Natural killer cell (primary cell): ENCODE measurements at regions of chr14 and their contacts with region 1.

Region 1: GRCh38 chr14:22314181-22314820 is 274.7 kb downstream of the DAD1 start:
- DNase-seq: peak in 1 of 2 donors; percentile 51
- ATAC-seq: peak; percentile 83 to 98 (median 94)
- H3K4me3 ChIP-seq: no peak overlapping the region
- H3K4me3 Mint-ChIP-seq: no peak overlapping the region
- H3K27ac ChIP-seq: no peak overlapping the region
- H3K27ac Mint-ChIP-seq: no peak overlapping the region
- H3K4me1 ChIP-seq: no peaks in the 10 kb centered on the region
- H3K4me1 Mint-ChIP-seq: no peaks in the 10 kb centered on the region
- H3K27me3 ChIP-seq: no peaks in the 10 kb centered on the region
- H3K27me3 Mint-ChIP-seq: peaks cover 0 to 9% of the 10 kb centered on the region in 2 donors
- CTCF ChIP-seq: peak; percentile 73

Region 2: DNA sequence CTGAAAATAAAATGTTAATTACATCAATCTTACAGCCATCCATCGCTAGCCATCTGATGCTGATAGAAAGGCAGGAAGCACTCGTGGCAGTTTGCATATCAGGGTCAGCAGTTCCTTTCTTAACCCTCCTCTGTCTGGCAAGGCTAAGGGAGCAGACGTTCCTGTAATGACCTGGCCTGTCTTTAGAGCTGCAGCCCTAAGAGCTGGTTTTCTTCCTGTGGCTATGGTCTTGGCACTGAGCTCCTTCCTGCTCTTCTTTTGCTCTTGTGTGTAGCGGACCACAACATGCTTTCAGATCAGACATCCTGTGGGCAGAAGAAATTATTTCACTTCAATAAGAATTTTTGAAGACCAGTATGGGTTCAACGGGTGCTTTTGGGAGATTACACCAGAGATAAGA is 104.3 kb after region 1 on chr14:
- intact Hi-C with region 1: no loop called
- DNase-seq: no peak
- ATAC-seq: peak; percentile 43 to 64 (median 55)
- H3K4me3 ChIP-seq: no peak overlapping the region
- H3K4me3 Mint-ChIP-seq: peak overlapping the region; percentile 78
- H3K27ac ChIP-seq: peak overlapping the region; percentile 75
- H3K27ac Mint-ChIP-seq: peak overlapping the region; percentile 91 to 94
- H3K4me1 ChIP-seq: peaks cover 67% of the 10 kb centered on the region
- H3K4me1 Mint-ChIP-seq: peaks cover 73 to 79% of the 10 kb centered on the region in 2 donors
- H3K27me3 ChIP-seq: no peaks in the 10 kb centered on the region
- H3K27me3 Mint-ChIP-seq: no peaks in the 10 kb centered on the region
- CTCF ChIP-seq: no peak

Region 3: DNA sequence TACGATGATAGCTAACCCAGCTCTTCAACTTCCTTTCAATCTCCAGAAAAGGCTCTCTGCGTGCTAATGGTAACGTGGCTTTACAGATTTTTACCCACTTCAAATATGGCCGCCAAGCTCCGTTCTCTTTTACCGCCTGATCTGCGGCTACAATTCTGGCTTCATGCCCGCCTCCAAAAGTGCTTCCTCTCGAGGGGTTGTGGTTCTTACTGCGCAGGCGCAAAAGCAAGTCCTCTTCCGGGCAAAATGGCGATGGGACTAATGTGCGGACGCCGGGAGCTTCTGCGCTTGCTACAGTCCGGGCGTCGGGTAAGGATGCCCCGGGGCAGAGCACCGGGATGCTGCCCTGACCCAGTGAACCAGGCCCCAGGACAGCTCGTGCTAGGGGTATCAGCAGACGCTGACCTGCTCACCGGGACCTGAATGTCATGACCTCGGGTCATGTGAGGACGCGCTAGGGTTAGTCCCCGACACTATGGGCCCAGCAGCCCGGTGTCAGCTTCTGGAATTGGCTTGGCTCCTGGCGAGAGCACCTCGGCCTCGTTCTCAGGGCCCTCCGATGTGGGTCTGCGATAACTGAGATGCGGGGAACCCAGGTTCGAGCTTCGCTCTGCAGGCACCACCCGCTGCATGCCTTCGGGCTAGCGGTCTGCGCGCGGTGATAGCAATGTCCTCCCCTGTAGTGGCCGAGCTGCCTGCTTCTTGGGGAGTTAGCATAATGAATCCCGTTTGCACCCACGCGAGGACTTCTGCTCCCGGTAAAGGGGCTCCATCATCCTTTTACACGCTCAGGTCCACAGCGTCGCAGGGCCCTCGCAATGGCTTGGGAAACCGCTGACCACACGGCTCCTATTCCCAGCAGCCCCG is 452.4 kb after region 1 on chr14 and contains the start of gene OXA1L:
- intact Hi-C with region 1: no loop called
- DNase-seq: peak; percentile 90 to 99
- ATAC-seq: peak; percentile 92 to 95 (median 95)
- H3K4me3 ChIP-seq: peak within 1 kb of the TSS; percentile 86
- H3K4me3 Mint-ChIP-seq: peak within 1 kb of the TSS; percentile 92
- H3K27ac ChIP-seq: peak within 1 kb of the TSS; percentile 79
- H3K27ac Mint-ChIP-seq: peak within 1 kb of the TSS; percentile 93 to 94
- H3K4me1 ChIP-seq: peaks cover 14% of the 10 kb centered on the region
- H3K4me1 Mint-ChIP-seq: peaks cover 35 to 36% of the 10 kb centered on the region in 2 donors
- H3K27me3 ChIP-seq: no peaks in the 10 kb centered on the region
- H3K27me3 Mint-ChIP-seq: no peaks in the 10 kb centered on the region
- CTCF ChIP-seq: no peak
- total RNA-seq, gene OXA1L: 121 to 143 (median 125) TPM

Region 4: DNA sequence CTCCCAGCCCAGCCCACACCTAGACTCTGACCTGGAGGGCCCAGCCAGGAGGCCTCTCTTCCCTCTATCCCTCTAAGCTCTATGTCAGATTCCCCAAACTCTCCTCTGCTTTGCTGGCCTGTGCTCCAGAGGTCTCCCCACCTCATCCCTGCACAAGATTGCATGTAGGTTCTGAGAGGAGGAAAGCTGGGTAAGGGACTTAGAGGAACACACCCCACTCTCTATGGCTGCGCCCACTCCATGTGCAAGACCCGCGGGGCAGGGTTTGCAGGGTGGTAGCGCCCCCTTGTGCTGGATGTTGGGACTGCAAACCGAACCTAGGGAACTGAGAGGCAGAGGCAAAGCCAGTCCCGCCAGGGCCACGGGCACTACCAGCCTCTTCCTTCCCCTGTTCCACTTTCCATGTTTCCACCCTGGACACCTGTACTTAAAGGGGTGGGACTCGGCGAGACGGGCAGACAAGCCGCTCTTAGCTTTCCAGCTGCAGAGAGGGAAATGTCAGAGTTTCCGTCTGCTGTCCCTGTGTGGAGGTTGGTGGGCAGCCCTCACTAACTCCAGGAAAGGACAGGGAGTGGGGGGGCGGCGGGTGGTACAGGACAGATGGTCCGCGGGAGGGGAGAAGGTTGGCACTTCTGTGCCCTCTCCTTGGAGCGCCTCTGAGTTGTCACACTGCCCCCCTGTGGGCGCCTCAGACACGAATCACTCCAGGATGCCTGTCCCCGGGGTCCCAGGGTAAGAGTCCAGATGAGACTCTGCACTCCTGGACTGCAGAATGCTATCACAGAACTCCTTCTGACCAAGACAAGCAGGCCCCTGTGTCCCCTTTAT is 538.9 kb after region 1 on chr14:
- intact Hi-C with region 1: loop called (anchors 10 kb)
- DNase-seq: peak; percentile 89 to 90
- ATAC-seq: peak; percentile 93 to 95 (median 94)
- H3K4me3 ChIP-seq: peak overlapping the region; percentile 45
- H3K4me3 Mint-ChIP-seq: peak overlapping the region; percentile 75
- H3K27ac ChIP-seq: no peak overlapping the region
- H3K27ac Mint-ChIP-seq: peak overlapping the region in 1 of 2 donors; percentile 78
- H3K4me1 ChIP-seq: peaks cover 21% of the 10 kb centered on the region
- H3K4me1 Mint-ChIP-seq: peaks cover 4 to 9% of the 10 kb centered on the region in 2 donors
- H3K27me3 ChIP-seq: peaks cover 29% of the 10 kb centered on the region
- H3K27me3 Mint-ChIP-seq: peaks cover 24 to 29% of the 10 kb centered on the region in 2 donors
- CTCF ChIP-seq: peak; percentile 97